ENCODE measurements at regions of chr6 and their contacts with region 1.

Region 1: GRCh38 chr6:153002607-153003365 is at the start of gene MTRF1L:
- DNase-seq: peak; percentile 92
- CTCF ChIP-seq: no peak

Region 2: GRCh38 chr6:152984387-152984872 is 18.4 kb before region 1 on chr6:
- CTCF ChIA-PET with region 1: interaction called, 17 read pairs
- POLR2A ChIA-PET with region 1: interaction called, 4 read pairs
- DNase-seq: peak; percentile 45
- CTCF ChIP-seq: no peak

Region 3: DNA sequence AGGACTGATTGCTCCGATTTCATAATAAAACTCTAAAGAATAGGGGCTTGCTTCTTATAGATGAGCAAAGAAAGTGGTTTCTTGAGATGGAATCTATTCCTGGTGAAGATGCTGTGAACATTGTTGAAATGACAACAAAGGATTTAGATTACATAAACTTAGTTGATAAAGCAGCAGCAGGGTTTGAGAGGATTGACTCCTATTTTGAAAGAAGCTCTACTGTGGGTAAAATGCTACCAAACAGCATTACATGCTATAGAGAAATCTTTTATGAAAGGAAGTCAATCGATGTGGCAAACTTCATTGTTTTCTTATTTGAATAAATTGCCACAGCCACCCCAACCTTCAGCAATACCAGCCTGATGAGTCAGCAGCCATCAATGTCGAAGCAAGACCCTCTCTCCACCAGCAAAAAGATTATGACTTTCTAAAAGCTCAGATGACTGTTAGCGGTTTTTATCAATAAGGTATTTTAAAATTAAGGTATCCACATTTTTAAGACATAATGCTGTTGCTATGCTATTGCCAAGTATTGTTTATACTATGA is 12.4 kb after region 1 on chr6:
- CTCF ChIA-PET with region 1: no interaction called
- POLR2A ChIA-PET with region 1: no interaction called
- DNase-seq: no peak
- CTCF ChIP-seq: no peak